Right cardiac atrium (tissue), 5 donors: ENCODE measurements at regions of chr17 and their contacts with region 1.

Region 1: GRCh38 chr17:78019976-78020716 is 61.6 kb downstream of the TNRC6C start:
- DNase-seq: no peak
- ATAC-seq: no peak
- H3K4me3 ChIP-seq: no peak overlapping the region
- H3K27ac ChIP-seq: no peak overlapping the region
- H3K4me1 ChIP-seq: no peaks in the 10 kb centered on the region
- H3K27me3 ChIP-seq: no peaks in the 10 kb centered on the region

Region 2: GRCh38 chr17:78075545-78075944 is 55.4 kb after region 1 on chr17:
- intact Hi-C with region 1: loop called in 1 of 4 experiments (anchors 10 kb)
- DNase-seq: no peak
- ATAC-seq: no peak
- H3K4me3 ChIP-seq: no peak overlapping the region
- H3K27ac ChIP-seq: no peak overlapping the region
- H3K4me1 ChIP-seq: no peaks in the 10 kb centered on the region
- H3K27me3 ChIP-seq: no peaks in the 10 kb centered on the region

Region 3: DNA sequence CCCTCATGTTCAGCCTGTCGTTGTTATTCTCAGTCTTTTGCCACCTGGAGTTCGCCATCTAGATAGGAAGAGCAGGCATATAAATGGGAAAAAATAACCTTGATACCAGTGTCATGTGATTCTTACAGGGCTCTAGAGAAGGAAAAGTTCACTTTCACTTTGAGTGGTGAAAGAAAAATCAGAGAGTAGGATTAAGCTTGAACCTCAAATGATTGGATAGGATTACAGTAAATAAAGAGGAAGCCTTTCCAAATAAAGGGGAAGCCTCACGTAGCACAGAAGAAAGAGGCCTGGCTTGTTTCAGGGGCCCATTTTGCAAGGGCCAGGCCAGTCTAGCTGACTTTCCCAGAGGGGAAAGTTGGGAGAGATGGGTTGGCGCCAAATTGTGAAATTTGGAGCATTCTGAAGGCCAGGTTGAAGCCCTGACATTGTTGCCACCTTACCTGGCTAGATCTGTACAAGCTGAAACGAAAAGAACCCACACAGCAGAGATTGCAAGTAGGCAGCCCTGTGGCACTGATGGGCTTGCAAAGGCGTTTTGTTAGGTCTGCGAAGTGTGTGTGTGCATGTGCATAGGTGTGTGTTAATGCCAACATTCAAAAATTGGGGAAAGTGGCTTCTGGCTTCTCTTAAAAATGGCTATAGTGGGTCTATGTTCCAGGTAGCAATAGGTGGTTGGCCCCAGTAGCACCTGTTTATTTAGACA is 69.6 kb after region 1 on chr17:
- intact Hi-C with region 1: loop called in 1 of 4 experiments (anchors 10 kb)
- DNase-seq: no peak
- ATAC-seq: peak in 1 of 2 donors; percentile 34
- H3K4me3 ChIP-seq: no peak overlapping the region
- H3K27ac ChIP-seq: peak overlapping the region; percentile 48
- H3K4me1 ChIP-seq: peaks cover 2% of the 10 kb centered on the region
- H3K27me3 ChIP-seq: no peaks in the 10 kb centered on the region